ENCODE measurements at regions of chr1 and their contacts with region 1.

Region 1: GRCh38 chr1:183304440-183305107 is 113.6 kb downstream of the NMNAT2 start:
- DNase-seq: no peak
- H3K4me3 ChIP-seq: no peak overlapping the region
- H3K27ac ChIP-seq: no peak overlapping the region
- H3K4me1 ChIP-seq: peaks cover 21% of the 10 kb centered on the region
- H3K27me3 ChIP-seq: no peaks in the 10 kb centered on the region
- CTCF ChIP-seq: no peak

Region 2: GRCh38 chr1:183370399-183371058 is 66.0 kb after region 1 on chr1:
- CTCF ChIA-PET with region 1: no interaction called
- dilution Hi-C with region 1: loop called (anchors 5 kb)
- in situ Hi-C with region 1: no loop called
- intact Hi-C with region 1: no loop called
- DNase-seq: no peak
- H3K4me3 ChIP-seq: no peak overlapping the region
- H3K27ac ChIP-seq: no peak overlapping the region
- H3K4me1 ChIP-seq: no peaks in the 10 kb centered on the region
- H3K27me3 ChIP-seq: peaks cover 2% of the 10 kb centered on the region
- CTCF ChIP-seq: no peak

Measured in mammary epithelial cell (primary cell).